Psoas muscle (tissue), 8 donors: ENCODE measurements at regions of chr3 and their contacts with region 1.

Region 1: GRCh38 chr3:51391075-51391567 is at the start of gene RBM15B:
- DNase-seq: peak; percentile 99
- ATAC-seq: peak; percentile 94 to 96 (median 96)
- H3K4me3 ChIP-seq: peak within 1 kb of the TSS; percentile 88
- H3K27ac ChIP-seq: peak within 1 kb of the TSS; percentile 90
- H3K4me1 ChIP-seq: peaks cover 50% of the 10 kb centered on the region
- H3K27me3 ChIP-seq: no peaks in the 10 kb centered on the region
- CTCF ChIP-seq: peak; percentile 94
- total RNA-seq, gene RBM15B: 7.0 to 11.9 (median 9.8) TPM

Region 2: DNA sequence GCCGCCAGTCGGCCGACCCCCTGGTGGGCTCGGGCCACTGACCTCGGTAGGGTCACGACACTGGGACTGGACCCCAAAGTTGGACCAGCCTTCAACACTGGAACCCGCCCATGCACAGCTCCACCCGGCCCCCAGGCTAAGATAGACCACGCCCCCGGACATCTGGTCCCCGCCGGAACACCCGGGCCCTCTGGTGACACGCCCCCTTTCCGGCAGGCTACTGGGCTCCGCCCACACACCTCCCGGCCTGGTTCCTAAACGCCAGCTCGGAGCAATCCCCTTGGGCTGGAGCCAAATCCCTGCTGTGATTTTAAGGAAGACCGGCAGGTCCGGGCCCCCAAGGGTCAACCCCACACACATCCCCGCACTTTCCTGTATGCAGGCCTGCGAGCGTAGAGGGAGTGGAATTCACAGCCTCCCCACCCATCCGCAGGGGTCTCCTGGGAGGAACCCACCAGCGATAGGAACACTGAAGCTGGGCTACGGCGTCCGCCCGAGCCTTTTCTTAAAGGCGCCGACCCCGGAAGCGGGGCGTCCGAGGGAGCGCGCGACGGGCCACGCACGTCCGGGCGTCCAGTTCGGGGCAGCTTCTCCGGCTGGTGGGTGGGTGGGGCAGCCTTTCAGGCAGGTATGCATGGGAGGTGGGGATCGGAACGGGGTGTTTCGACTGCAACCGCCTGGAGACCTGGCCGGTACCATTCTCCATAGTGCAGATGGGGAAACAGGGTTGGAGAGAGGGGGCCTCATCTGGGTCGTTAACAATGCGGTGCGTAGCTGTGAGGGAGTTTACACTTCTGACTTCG is 822.0 kb before region 1 on chr3 and contains the start of gene HEMK1:
- intact Hi-C with region 1: loop called in 1 of 2 experiments (anchors 5 kb)
- DNase-seq: peak; percentile 97 to 99
- ATAC-seq: peak; percentile 86 to 90 (median 88)
- H3K4me3 ChIP-seq: peak within 1 kb of the TSS; percentile 81
- H3K27ac ChIP-seq: peak within 1 kb of the TSS; percentile 89
- H3K4me1 ChIP-seq: peaks cover 15% of the 10 kb centered on the region
- H3K27me3 ChIP-seq: no peaks in the 10 kb centered on the region
- CTCF ChIP-seq: no peak
- total RNA-seq, gene HEMK1: 6.1 to 16.2 (median 9.3) TPM

Region 3: GRCh38 chr3:51670823-51671733 is 280.0 kb after region 1 on chr3 and contains the start of gene TEX264:
- intact Hi-C with region 1: loop called (anchors 5 to 10 kb)
- DNase-seq: peak; percentile 93 to 95
- ATAC-seq: peak; percentile 88 to 92 (median 90)
- H3K4me3 ChIP-seq: peak within 1 kb of the TSS; percentile 89
- H3K27ac ChIP-seq: peak within 1 kb of the TSS; percentile 82
- H3K4me1 ChIP-seq: peaks cover 23% of the 10 kb centered on the region
- H3K27me3 ChIP-seq: no peaks in the 10 kb centered on the region
- CTCF ChIP-seq: no peak
- total RNA-seq, gene TEX264: 16.8 to 29.6 (median 21.9) TPM

Region 4: DNA sequence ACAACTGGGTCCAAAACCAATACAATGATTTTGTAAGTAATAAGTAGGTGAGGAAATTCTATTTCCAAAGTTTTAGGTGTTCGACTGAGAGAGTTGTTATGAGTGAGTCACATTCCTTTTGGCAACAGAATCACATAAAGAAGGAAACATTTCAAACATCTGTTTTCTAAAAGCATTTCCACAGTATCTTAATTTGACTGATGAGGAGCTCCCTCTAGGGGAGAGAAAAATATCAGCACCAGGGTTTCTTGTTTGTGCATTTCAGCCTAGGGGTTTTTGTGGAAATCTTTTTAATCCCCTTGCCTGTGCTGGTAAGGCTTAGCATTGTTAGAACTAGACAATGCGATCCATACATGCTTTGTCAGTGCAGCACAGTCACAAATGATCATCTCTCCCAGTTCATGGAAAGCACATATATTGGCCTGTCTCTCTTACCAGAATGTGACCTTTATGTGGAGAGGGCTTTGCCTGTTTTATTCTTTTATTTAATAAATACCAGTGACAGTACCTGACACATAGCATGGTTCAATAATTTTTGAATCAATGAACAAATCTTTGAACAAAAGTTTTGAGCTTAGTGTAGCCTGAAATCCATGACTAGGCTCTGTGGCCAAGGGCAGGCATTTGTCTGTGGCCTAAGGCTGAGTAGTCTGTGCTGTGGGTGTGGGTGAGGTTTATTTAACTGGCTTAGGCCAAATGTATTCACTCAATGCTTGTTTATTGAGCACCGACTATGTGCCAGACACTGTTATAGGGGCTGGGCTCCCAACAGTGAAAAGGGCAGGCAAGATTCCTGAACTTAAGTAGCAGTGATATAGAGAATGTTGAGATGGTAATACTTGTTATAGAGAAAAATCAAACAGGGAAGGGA is 409.0 kb after region 1 on chr3:
- intact Hi-C with region 1: loop called in 1 of 2 experiments (anchors 5 kb)
- DNase-seq: no peak
- ATAC-seq: peak in 2 of 4 donors; percentile 40 to 67
- H3K4me3 ChIP-seq: no peak overlapping the region
- H3K27ac ChIP-seq: no peak overlapping the region
- H3K4me1 ChIP-seq: no peaks in the 10 kb centered on the region
- H3K27me3 ChIP-seq: no peaks in the 10 kb centered on the region
- CTCF ChIP-seq: peak; percentile 70